ENCODE measurements at regions of chr17 and their contacts with region 1.

Region 1: DNA sequence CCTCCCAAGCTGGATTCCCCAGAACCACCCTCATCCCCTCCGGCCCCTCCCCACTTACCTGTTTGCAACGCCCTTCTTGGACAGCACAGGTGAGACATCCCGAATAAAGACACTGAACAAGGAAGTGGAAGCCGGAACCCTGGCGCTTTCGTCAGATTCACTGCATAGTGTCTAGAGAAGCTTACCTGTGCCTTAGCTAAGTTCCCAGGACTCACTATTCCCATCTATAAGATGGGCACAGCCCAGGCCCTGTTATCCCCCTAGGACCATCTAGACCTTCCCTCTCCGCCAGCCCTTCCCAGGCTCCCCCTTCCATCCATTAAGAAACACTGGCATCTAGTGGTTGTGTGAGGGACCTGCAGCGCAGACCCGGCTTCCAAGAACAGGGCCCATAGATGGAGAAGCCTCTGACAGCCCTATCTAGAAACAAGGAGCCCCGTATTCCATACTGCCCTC is 26.9 kb upstream of the RPL38 start:
- DNase-seq: peak; percentile 24 to 62 (median 31)
- H3K4me3 ChIP-seq: no peak overlapping the region
- H3K27ac ChIP-seq: no peak overlapping the region
- H3K4me1 ChIP-seq: no peaks in the 10 kb centered on the region
- H3K27me3 ChIP-seq: no peaks in the 10 kb centered on the region
- CTCF ChIP-seq: peak in 2 of 3 donors; percentile 35 to 39
- EP300 ChIP-seq: no peak
- POLR2A ChIP-seq: no peak

Region 2: DNA sequence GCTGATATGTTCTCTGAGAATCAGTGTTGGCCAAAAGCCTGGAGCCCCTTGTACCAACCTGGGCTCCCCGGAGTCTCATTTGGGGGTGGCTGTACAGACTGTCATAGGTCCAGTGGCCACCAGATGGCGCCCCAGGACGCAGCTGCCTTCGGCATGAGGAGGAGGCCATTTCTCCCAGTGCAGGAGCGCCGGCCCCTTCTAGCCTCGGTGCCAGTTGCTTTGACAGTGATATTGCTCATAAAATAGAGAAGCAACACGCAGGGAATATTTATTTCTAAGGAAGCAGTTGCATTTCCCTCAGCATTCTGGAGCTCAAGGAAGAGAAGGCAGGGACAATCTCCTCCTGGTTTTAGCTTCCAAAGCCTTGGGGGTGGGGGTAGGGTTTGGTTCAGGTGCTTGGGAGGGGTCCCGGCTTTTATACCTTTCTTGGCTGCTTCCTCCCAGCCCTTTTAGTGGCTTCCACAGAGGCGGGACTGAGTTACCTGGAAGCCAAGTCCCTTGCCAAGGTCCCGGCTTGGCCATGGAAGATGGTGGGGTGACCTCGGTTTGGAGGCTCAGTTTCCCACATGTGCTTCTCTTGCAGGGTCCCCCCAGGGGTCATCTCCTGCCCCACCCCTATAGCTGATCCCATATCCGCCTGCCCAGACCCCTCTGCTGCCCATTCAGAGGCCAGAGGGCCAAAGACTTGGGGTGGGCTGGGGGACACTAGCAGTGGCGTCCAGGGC is 747.0 kb before region 1 on chr17:
- intact Hi-C with region 1: loop called in 3 of 4 experiments (anchors 5 kb)
- DNase-seq: peak; percentile 68 to 90 (median 82)
- H3K4me3 ChIP-seq: no peak overlapping the region
- H3K27ac ChIP-seq: no peak overlapping the region
- H3K4me1 ChIP-seq: no peaks in the 10 kb centered on the region
- H3K27me3 ChIP-seq: no peaks in the 10 kb centered on the region
- CTCF ChIP-seq: peak; percentile 73 to 85 (median 76)
- EP300 ChIP-seq: no peak
- POLR2A ChIP-seq: no peak

Region 3: DNA sequence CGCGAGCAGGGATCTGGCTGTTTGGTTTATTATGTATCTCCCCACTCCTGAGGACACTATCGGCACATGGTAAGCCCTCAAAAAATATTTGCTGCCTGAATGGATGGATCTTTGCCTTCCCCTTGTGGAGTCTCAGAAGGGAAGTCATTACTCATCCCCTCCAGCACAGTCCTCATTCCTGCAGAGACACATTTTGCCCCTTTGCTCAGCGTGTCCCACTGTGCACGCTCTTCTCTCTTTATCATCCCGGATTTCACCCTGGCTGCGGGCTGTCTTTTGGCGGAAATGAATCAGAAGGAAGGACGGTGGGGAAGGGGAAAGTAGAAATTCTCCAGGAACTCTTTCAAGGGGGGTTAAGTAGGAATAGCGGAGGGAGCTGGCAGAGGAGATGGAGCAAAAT is 739.6 kb before region 1 on chr17:
- intact Hi-C with region 1: loop called in 3 of 4 experiments (anchors 5 kb)
- DNase-seq: no peak
- H3K4me3 ChIP-seq: no peak overlapping the region
- H3K27ac ChIP-seq: no peak overlapping the region
- H3K4me1 ChIP-seq: no peaks in the 10 kb centered on the region
- H3K27me3 ChIP-seq: no peaks in the 10 kb centered on the region
- CTCF ChIP-seq: no peak
- EP300 ChIP-seq: no peak
- POLR2A ChIP-seq: no peak

Region 4: DNA sequence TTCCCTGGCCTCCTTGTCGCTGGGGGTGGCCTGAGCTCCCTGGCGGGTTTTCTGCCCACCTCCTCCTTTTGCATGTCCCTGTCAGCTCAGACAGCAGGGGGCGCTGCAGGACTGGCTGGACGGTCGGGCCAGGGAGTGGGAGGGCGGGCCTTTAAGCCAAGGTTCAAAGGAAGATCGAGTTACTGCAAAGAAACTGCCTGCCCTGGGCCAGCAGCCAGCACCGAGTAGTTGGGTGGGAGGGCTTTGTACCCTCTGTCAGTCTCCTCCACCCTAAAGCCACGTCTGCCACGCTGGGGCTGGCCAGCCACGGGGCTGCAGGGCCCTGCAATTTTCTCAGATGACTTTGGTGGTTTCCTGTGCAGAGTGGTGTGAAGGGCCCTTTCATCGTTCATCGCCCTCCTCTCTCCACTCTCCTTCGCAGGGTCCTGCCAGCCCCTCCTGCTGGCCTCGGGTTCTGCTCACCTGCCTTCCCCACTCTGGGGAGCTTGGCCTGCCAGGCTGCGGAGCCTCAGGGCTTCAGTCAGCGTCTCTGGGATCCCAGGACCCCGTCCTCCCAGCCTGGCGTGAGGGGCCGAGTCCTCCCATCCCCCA is 203.0 kb after region 1 on chr17:
- intact Hi-C with region 1: no loop called
- DNase-seq: peak; percentile 91 to 97 (median 96)
- H3K4me3 ChIP-seq: no peak overlapping the region
- H3K27ac ChIP-seq: peak overlapping the region; percentile 0 to 61
- H3K4me1 ChIP-seq: peaks cover 2% of the 10 kb centered on the region
- H3K27me3 ChIP-seq: no peaks in the 10 kb centered on the region
- CTCF ChIP-seq: peak; percentile 93 to 98 (median 97)
- EP300 ChIP-seq: no peak
- POLR2A ChIP-seq: peak; percentile 17